Cardiac septum (tissue), 1 donor: ENCODE measurements at regions of chr4 and their contacts with region 1.

Region 1: GRCh38 chr4:173564461-173564860 is 34.4 kb upstream of the HAND2 start:
- DNase-seq: no peak

Region 2: GRCh38 chr4:173380987-173381386 is 183.5 kb before region 1 on chr4:
- intact Hi-C with region 1: no loop called
- DNase-seq: no peak

Region 3: DNA sequence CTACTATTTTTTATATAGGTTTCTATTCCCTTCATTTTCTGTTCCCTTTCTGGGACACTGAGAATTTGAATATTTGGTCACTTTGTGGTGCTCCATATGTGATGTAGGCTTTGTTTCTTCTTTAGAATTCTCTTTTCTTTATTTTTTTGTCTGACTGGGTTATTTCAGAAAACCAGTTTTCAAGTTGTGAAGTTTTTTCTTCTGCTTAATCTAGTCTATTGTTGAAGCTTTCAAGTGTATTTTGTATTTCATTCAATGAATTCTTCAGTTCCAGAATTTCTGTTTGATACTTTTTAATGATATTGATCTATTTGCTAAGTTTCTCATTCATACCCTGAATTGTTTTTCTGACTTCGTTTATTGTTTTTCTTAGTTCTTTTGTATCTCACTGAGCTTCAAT is 61.8 kb after region 1 on chr4:
- intact Hi-C with region 1: loop called (anchors 5 kb)
- DNase-seq: no peak